Posterior cingulate gyrus (tissue), 11 donors: ENCODE measurements at regions of chr5 and their contacts with region 1.

Region 1: DNA sequence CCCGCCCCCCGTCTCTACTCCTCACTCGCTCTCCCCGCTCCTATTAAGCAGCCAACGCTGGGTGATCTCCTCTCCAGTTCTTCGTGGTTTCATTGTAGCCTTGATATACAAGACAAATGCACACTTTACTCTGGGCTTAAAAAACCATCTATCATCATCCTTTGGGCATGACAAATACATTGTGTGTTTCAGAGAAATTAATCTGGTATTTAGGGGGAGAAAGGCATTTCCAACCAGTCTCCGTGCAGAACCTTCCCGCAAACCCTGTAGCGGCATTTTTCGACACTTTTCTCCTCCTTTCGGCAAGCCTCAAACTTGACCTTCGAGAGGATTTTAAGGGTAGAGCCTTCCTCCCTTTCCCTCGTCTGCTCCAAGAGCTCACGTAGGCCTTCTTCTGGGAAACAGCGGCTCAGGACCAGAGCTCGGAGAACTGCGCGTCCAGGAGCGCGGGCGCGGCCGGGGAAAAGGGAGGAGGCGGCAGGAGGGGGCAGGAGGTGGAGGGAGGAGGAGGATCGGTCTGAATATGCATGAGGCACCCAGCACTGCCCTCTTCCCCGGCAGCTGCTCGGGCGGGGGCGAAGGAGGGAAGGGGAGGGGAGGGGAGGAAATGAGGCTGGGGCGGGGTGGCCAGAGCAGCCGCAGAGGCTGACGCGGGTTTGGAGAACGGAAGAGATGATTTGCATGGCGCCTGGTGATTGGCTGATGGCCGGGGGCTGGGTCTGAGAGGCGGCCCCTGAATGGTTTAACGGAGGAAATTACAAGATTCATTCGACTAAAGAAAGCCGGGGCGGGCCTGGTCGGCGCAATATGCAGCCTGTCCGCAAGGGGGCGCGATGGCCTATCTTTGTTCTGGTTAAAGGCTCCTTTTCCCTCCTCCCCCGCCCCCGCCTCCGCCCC is 127.5 kb downstream of the TMEM161B start:
- DNase-seq: peak; percentile 99 to 100 (median 99)

Region 2: DNA sequence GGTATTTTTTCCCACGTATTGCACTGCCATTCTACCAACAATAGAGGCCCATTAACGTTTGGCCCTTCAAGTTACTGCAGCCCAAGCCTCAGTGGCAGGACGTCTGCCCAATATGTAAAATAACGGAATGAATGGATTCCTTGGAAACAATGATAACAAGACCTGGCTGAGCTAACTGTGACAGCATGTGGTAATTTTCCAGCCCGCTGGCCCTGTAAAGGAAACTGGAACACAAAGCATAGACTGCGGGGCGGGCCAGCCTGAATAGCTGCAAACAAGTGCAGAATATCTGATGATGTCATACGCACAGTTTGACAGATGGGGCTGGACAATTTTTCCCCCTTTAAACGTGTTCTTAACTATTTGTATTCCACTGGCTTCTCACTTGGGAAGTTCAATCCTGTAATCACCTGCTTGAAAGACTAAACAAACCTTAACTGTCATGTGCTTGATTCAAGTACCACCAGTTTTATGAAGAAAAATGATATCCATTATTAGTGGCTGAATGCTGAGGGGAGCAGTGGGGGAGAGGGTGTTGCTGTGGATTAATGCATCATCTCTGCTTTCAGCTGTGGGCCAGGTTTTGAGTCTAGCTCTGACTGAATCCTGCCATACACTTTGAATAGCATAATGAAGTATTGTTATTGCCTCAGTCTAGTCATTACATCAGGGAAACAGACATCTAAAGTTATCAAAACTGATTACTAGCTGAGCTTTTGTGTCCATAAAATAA is 196.4 kb before region 1 on chr5:
- intact Hi-C with region 1: loop called (anchors 1 kb)
- DNase-seq: peak; percentile 67 to 97 (median 82)

Region 3: GRCh38 chr5:88063813-88064212 is 77.3 kb before region 1 on chr5:
- intact Hi-C with region 1: no loop called
- DNase-seq: no peak

Region 4: GRCh38 chr5:88391116-88391515 is 250.0 kb after region 1 on chr5:
- intact Hi-C with region 1: loop called (anchors 10 kb)
- DNase-seq: peak in 5 of 10 donors; percentile 42 to 82 (median 67)

Region 5: DNA sequence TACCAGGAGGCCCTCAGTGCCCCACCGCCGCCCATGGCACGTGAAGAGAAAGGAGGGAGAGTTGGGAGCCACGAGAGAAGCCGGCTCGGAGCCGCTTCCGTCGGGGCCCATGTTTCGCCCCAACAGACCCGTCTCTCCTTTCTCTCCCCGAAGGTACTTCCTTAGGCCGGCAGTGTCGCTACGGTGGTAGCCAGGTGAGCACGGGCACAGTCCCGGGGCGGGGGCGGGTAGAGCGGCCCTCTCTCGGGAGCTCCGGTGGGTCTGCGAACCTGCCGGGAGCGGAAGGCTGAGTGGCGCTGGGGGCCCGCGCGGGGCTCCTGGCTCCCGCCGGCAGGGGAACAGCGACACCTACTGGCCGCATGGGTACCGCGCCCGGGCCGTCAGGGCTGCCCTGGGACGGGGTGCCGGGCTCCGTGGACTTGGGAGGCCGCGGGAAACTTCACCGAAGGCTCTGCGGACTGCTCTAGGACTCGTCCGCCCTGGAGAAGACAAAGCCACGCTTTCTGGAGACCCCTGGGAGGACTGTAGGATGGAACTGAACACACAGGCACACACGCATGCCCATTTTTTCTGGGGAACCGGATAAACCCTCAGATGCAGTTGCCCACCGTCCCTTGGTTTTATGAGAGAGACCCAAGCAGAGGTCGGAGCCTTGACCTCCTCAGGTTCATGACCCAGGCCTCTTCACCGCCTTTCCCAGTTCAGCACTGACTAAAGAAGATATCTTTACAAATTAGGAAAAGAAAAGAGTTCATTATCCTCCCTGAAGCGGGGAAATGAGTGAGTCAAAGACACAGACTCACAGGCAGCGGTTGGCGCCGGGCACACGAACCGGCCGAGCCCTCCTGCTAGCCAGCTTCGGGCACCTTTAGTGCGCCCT is 539.4 kb after region 1 on chr5:
- intact Hi-C with region 1: loop called (anchors 5 kb)
- DNase-seq: peak; percentile 80 to 97 (median 90)